ENCODE measurements at regions of chr17 and their contacts with region 1.

Region 1: DNA sequence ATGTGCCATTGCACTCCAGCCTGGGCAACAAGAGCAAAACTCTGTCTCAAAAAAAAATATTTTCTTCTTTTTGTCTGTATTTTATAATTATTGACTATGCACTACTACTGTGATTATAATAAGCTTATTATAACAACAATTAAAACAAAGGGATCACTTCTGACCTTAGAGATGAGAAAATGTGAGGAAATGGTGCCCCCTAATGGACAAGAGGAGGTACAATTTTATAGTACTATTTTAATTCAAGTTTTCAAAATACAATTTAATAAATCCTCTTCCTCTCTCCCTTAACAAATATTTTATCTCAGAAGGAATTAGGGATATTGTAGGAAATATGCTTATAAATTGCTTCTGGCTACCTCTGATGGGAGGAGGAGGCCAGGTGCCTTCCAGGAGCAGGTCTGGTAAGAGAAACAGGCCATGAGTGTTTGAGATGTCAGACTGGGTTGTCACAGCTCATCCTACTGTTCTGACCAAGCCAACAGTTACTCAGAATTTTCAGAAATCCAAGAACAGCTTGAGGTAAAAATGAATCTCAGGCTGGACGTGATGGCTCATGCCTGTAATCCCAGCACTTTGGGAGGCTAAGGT is 14.0 kb downstream of the VPS53 start:
- DNase-seq: no peak
- H3K4me3 Mint-ChIP-seq: no peak overlapping the region
- H3K27ac Mint-ChIP-seq: no peak overlapping the region
- H3K4me1 Mint-ChIP-seq: peaks cover 2% of the 10 kb centered on the region
- H3K27me3 Mint-ChIP-seq: no peaks in the 10 kb centered on the region

Region 2: DNA sequence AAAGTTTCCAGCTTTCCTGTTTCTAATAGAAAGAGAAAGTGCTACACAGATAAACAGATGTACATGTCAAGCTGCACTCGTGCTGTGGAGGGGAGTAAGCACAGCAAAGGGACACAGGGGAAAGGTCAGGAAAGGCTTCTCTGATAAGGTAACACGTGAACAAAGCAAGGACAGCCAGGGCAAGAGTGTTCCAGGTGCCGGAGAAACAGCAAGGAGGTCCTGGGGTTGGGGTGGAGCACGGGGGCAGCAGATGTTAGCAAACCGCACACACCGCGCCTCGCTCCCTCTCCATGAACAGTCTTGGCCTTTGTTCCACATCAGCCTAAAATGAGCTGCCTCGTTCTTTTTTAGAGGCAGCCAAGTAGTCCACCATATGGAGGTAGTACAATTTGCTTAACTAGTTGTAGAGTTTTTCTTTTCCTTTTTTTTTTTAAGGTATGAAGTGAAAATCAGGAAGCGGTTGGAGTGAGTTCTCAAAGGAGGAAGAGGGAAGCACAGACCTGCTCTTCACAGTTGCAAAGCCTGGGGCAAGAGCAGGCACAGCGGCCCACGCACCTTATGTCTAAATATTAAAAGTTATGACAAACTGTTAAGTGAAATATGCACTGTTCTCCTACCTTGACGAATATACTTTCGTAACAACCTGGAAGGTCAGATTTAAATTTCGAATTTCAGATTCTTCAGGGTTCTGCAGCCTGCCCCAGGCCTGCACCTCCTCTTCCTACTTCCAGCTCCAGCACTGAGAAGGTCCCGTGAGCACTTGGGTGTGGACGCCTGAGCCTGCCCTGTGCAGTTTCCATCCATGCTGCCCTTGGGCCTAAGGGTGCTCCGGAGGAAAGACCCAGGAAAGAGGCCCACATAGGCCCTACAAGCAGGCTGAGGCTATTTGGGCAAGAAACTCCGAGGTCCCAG is 306.5 kb before region 1 on chr17:
- CTCF ChIA-PET with region 1: no interaction called
- intact Hi-C with region 1: loop called (anchors 10 kb)
- DNase-seq: no peak
- H3K4me3 Mint-ChIP-seq: peak overlapping the region; percentile 13
- H3K27ac Mint-ChIP-seq: peak overlapping the region; percentile 59
- H3K4me1 Mint-ChIP-seq: peaks cover 8% of the 10 kb centered on the region
- H3K27me3 Mint-ChIP-seq: no peaks in the 10 kb centered on the region